ENCODE measurements at regions of chr2 and their contacts with region 1.

Region 1: DNA sequence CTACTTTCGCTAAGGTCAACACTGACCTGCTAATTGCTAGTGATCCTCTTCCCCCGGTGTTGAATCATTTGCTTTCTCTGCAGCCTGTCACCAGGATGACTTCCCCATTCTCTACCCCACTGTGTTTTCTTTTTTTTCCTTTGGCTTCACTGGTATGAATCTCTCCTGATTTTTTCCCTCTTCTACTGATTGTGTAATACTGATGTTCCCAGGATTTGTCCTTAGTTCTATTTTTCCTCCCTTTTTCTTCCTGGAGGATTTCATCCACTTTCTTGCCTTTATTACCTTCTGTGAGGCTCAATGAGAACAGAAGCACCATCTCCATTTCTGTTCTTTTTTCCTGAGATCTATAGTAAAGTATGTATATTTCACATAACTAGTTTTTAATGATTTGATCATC is 14.1 kb upstream of the MSH2 start:
- DNase-seq: no peak
- CTCF ChIP-seq: no peak

Region 2: DNA sequence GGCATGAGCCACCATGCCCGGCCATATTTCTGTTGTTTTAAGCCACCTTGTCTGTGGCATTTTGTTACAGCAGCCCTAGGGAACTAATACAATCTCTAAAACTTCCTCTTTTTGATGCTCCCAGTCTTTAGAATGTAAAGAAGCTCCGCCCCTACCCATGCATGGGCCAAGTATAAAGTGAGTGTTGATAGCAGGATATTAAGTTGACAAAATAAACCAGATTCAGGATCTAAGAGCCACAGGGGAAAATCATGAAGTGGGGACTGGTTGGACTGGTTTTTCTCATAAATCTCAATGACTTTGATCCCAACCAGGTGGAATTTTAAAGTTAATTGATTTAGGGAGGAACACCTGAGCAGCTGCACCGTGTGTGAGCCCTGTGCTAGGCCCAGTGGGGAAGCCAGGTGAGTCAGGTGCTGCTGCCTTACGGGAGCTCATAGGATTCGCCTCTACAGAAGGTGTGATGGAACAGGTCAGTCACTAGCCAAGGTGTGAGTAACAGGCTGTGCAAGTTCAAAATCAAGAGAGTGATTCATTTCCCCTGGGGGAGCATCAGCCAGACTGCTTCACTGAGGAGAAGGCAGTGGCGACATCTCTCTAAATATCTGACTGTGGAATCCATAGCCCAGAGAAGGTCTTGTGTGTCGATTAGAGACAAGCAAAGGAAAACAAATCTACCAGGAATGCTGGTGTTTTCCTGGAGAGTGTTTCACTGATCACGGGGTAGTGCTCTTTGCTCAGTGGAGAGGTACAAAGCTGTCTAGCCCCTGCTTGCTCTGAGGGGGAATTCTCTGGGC is 48.9 kb before region 1 on chr2:
- CTCF ChIA-PET with region 1: interaction called, 90 read pairs
- POLR2A ChIA-PET with region 1: interaction called, 10 read pairs
- DNase-seq: no peak
- CTCF ChIP-seq: no peak

Region 3: DNA sequence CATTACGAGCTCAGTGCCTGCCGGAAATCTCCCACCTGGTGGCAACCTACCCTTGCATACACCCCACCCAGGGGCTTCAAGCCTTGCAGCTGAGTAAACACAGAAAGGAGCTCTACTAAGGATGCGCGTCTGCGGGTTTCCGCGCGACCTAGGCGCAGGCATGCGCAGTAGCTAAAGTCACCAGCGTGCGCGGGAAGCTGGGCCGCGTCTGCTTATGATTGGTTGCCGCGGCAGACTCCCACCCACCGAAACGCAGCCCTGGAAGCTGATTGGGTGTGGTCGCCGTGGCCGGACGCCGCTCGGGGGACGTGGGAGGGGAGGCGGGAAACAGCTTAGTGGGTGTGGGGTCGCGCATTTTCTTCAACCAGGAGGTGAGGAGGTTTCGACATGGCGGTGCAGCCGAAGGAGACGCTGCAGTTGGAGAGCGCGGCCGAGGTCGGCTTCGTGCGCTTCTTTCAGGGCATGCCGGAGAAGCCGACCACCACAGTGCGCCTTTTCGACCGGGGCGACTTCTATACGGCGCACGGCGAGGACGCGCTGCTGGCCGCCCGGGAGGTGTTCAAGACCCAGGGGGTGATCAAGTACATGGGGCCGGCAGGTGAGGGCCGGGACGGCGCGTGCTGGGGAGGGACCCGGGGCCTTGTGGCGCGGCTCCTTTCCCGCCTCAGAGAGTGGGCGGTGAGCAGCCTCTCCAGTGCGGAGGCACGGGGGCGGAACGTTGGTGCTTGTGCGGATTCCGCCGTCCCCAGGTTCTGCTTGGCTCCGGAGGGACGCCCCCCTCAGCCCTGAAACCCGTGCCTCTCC is 14.1 kb after region 1 on chr2 and contains the start of gene MSH2:
- CTCF ChIA-PET with region 1: interaction called, 26 read pairs
- POLR2A ChIA-PET with region 1: interaction called, 4 read pairs
- DNase-seq: peak; percentile 99
- CTCF ChIP-seq: no peak

Region 4: DNA sequence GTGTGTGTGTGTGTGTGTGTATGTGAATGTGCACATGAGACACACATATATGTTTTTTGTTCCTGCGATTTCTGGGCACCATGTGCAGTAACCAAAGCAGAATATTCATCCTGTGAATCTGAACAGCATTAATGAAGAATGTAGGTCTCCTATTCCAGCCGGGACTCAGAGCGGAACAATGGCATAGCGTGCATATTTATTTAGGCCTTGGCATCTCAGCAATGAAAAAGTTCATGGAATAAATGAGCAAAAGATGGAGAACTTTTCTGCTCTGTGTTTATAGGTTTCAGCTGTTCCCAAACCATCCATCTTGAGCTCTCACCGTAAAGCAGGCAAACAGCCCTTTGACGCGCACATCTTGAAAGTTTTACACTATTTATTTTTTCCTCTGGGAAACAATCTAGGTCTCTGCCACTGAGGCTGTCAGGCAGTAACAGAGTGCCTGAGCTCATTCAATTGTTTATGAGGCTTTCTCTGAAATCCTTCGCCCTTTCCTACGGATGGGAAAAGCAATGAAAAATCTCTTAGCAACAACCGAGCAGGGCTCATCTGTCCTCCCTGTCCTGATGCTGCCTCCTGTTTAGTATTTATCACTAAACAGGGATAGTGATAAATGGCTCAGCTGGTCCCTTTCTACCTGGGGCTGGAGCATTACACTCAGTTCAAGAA is 247.8 kb after region 1 on chr2:
- CTCF ChIA-PET with region 1: no interaction called
- POLR2A ChIA-PET with region 1: no interaction called
- DNase-seq: no peak
- CTCF ChIP-seq: no peak